MCF 10A (cell line): ENCODE measurements at regions of chr1 and their contacts with region 1.

Region 1: GRCh38 chr1:27201295-27201694 is 33.1 kb upstream of the WDTC1 start:
- DNase-seq: no peak
- H3K4me3 Mint-ChIP-seq: no peak overlapping the region
- H3K27ac Mint-ChIP-seq: no peak overlapping the region
- H3K4me1 Mint-ChIP-seq: peaks cover 7% of the 10 kb centered on the region
- H3K27me3 Mint-ChIP-seq: no peaks in the 10 kb centered on the region
- CTCF ChIP-seq: no peak

Region 2: DNA sequence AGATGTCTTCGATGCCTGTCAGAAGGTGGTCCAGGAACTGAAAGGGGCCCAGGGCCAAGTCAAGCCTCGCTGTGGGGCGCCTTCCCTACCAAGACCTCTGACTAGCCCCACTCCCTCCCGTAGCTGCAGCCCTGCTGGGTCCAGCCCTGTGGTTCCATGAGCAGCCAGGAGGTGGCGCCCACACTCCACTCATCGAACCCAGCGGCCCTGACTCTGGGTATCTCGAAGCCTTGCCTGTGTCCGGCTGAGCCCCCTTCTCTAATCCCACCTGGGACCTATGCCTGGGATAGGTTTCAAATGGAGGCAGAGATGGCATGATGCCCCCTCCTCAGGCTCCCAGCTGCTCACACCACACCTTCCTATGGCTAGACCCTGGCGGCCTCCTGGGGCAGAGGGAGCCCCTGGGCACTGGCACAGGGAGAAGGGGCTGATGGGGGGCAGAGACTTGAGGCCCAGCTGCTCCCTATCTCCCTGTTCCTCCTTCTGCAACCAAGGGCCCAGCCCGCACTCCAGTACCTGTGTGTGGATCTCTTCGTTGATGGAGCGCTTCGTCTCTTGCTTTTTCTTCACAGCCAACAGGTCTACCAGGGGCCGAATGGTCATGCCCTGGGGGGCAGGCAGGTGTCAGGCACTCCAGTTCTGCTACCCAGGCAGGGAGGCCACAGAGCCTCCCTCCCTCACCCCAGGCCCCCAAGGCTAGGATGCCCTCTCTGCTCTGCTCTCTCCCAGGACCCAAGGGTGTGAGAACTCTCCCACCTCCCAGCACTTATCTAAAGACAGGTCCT is 98.4 kb before region 1 on chr1:
- CTCF ChIA-PET with region 1: interaction called, 26 read pairs
- POLR2A ChIA-PET with region 1: no interaction called
- intact Hi-C with region 1: loop called (anchors 1 kb)
- DNase-seq: peak; percentile 72
- H3K4me3 Mint-ChIP-seq: no peak overlapping the region
- H3K27ac Mint-ChIP-seq: no peak overlapping the region
- H3K4me1 Mint-ChIP-seq: peaks cover 19% of the 10 kb centered on the region
- H3K27me3 Mint-ChIP-seq: no peaks in the 10 kb centered on the region
- CTCF ChIP-seq: peak; percentile 95

Region 3: DNA sequence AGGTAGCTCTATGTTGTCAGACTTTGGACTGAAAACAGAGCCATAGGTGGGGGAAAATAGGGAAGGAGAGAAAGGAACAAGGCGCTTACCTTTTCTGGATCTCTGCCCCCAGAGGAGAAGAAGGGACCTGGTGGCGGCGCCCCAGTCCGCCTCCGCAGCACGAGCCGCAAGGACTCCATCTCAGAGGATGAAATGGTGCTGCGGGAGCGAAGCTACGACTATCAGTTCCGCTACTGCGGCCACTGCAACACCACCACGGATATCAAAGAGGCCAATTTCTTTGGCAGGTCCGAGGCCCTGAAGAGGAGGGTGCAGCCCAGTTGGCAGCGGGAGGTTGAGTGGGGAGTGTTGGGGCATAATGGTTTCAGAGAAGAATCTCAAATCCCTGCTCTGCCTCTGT is 102.2 kb after region 1 on chr1:
- CTCF ChIA-PET with region 1: no interaction called
- POLR2A ChIA-PET with region 1: no interaction called
- intact Hi-C with region 1: no loop called
- DNase-seq: no peak
- H3K4me3 Mint-ChIP-seq: no peak overlapping the region
- H3K27ac Mint-ChIP-seq: no peak overlapping the region
- H3K4me1 Mint-ChIP-seq: peaks cover 13% of the 10 kb centered on the region
- H3K27me3 Mint-ChIP-seq: no peaks in the 10 kb centered on the region
- CTCF ChIP-seq: no peak